CD4-positive, alpha-beta T cell (primary cell): ENCODE measurements at regions of chr14 and their contacts with region 1.

Region 1: DNA sequence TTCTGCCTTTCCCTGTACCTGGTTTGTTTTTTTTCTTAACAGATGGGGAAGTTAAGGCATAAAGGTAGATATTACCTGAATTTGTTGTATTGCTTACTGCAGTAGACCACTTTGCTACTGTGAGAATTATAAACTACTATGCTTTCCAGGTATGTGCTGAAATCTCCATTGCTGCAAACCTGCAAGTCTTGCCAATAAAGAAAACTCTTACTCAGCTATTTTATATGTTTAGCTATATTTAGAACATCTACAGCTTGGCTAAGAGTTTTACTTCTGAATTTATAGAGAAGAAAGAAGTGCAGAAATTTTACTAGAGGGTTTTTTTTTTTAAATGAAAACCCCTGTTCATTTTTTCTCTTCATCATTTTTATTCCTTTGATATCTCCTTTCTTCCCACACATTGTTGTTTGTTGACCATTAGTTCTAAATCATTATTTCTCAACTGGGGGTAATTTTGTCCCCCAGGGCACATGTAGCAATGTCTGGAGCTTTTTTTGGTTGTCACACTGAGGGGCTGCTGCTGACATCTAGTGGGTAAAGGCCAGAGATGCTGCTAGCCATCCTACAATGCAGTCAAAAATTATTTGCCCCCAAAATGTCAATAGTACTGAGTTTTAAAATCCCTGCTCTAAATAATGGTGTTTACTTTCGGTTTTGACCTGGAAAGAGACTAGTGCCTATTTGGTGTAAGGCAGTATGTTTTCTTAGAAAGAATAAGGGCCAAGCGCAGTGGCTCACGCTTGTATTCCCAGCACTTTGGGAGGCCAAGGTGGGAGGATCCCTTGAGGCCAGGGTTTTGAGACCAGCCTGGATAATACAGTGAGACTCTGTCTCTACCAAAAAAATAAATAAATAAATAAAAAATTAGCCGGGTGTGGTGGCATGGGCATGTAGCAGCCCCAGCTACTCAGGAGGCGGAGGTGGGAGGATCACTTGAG is 48.6 kb downstream of the PCNX1 start:
- DNase-seq: peak; percentile 24 to 79 (median 42)
- ATAC-seq: peak; percentile 84
- H3K4me3 ChIP-seq: no peak overlapping the region
- H3K4me3 Mint-ChIP-seq: no peak overlapping the region
- H3K27ac ChIP-seq: no peak overlapping the region
- H3K27ac Mint-ChIP-seq: peak overlapping the region; percentile 55
- H3K4me1 ChIP-seq: peaks cover 19% of the 10 kb centered on the region
- H3K4me1 Mint-ChIP-seq: peaks cover 44% of the 10 kb centered on the region
- H3K27me3 ChIP-seq: no peaks in the 10 kb centered on the region
- H3K27me3 Mint-ChIP-seq: no peaks in the 10 kb centered on the region
- CTCF ChIP-seq: peak; percentile 89

Region 2: DNA sequence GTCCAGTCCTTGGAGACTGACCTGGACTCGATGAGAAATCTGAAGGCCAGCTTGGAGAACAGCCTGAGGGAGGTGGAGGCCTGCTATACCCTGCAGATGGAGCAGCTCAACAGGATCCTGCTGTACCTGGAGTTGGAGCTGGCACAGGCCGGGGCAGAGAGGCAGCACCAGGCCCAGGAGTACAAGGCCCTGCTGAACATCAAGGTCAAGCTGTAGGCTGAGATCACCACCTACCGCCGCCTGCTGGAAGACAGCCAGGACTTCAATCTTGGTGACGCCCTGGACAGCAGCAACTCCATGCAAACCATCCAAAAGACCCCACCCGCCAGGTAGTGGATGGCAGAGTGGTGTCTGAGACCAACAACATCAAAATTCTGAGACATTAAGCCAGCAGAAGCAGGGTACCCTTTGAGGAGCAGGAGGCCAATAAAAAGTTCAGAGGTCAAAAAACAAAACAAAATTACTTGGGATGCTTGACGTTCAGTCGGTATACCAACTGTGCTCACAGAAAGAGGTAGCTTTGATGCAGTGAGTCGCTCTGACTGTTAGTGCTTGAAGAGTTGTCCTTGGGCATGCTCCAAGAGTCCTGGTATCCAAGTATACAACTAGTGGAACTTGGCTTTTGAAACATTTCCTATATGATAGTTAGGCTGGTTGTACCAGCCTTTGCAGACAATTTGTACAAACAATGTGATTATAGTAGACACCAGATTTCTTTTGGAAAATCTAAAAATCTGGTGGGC is 360.2 kb before region 1 on chr14:
- CTCF ChIA-PET with region 1: no interaction called
- POLR2A ChIA-PET with region 1: no interaction called
- intact Hi-C with region 1: no loop called
- DNase-seq: no peak
- ATAC-seq: no peak
- H3K4me3 ChIP-seq: no peak overlapping the region
- H3K4me3 Mint-ChIP-seq: no peak overlapping the region
- H3K27ac ChIP-seq: no peak overlapping the region
- H3K27ac Mint-ChIP-seq: no peak overlapping the region
- H3K4me1 ChIP-seq: peaks cover 11% of the 10 kb centered on the region
- H3K4me1 Mint-ChIP-seq: peaks cover 33% of the 10 kb centered on the region
- H3K27me3 ChIP-seq: no peaks in the 10 kb centered on the region
- H3K27me3 Mint-ChIP-seq: no peaks in the 10 kb centered on the region
- CTCF ChIP-seq: no peak

Region 3: DNA sequence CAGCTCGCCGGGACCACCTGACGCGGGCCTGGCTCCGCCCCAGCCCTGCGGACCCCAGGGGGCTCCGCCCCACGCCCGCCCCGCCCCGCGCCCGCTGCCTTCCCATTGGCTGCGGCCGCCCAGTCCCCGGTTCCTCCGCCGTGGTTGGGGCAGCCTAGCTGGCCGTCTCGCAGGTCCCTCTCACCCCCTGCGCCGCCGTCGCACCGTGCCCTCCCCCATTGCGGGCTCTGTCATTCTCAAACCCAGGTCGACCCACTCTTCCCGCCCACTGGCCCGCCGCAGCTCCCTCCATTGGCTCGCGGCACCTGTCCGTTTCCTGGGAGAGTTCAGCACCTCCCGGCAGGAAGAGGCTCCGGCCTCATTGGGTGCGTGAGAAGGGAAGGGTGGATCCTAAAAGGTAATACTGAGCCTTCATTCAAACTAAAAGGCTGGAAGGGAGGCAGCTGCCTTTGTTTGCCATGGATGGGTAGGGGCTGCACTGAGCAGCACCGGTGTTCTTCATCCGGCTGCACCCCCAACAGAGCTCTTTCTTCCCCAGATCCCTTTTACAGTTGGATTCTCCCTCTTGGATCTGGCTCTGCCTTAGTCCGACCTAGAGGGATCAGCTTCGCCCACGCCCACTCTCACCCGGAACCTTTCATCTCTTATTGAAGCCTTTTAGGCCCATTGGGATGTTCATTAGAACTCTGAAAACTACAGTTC is 146.1 kb before region 1 on chr14:
- CTCF ChIA-PET with region 1: interaction called, 12 read pairs
- POLR2A ChIA-PET with region 1: no interaction called
- intact Hi-C with region 1: no loop called
- DNase-seq: peak; percentile 69 to 94 (median 84)
- ATAC-seq: peak; percentile 74
- H3K4me3 ChIP-seq: peak overlapping the region; percentile 74
- H3K4me3 Mint-ChIP-seq: no peak overlapping the region
- H3K27ac ChIP-seq: peak overlapping the region in 1 of 2 donors; percentile 31
- H3K27ac Mint-ChIP-seq: no peak overlapping the region
- H3K4me1 ChIP-seq: peaks cover 15% of the 10 kb centered on the region
- H3K4me1 Mint-ChIP-seq: peaks cover 10% of the 10 kb centered on the region
- H3K27me3 ChIP-seq: no peaks in the 10 kb centered on the region
- H3K27me3 Mint-ChIP-seq: no peaks in the 10 kb centered on the region
- CTCF ChIP-seq: no peak

Region 4: DNA sequence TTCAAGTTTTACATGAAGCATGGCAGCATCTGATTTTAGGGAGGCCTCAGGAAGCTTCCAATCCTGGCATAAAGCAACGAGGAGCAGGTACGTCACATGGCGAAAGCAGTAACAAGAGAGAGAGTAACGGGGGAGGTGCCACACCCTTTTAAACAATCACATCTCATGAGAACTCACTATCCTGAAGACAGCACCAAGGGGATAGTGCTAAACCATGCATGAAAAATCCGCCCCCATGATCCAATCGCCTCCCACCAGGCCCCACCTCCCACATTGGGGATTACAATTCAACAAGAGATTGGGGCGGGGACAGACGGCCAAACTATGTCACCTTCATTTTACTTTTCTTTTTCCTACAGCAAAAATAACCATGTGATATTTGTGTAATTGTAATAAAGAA is 139.3 kb before region 1 on chr14:
- CTCF ChIA-PET with region 1: interaction called, 26 read pairs
- POLR2A ChIA-PET with region 1: interaction called, 11 read pairs
- intact Hi-C with region 1: loop called (anchors 1 to 2 kb)
- DNase-seq: no peak
- ATAC-seq: no peak
- H3K4me3 ChIP-seq: no peak overlapping the region
- H3K4me3 Mint-ChIP-seq: no peak overlapping the region
- H3K27ac ChIP-seq: no peak overlapping the region
- H3K27ac Mint-ChIP-seq: no peak overlapping the region
- H3K4me1 ChIP-seq: peaks cover 5% of the 10 kb centered on the region
- H3K4me1 Mint-ChIP-seq: peaks cover 15% of the 10 kb centered on the region
- H3K27me3 ChIP-seq: peaks cover 5 to 7% of the 10 kb centered on the region in 2 experiments
- H3K27me3 Mint-ChIP-seq: peaks cover 28% of the 10 kb centered on the region
- CTCF ChIP-seq: no peak

Region 5: DNA sequence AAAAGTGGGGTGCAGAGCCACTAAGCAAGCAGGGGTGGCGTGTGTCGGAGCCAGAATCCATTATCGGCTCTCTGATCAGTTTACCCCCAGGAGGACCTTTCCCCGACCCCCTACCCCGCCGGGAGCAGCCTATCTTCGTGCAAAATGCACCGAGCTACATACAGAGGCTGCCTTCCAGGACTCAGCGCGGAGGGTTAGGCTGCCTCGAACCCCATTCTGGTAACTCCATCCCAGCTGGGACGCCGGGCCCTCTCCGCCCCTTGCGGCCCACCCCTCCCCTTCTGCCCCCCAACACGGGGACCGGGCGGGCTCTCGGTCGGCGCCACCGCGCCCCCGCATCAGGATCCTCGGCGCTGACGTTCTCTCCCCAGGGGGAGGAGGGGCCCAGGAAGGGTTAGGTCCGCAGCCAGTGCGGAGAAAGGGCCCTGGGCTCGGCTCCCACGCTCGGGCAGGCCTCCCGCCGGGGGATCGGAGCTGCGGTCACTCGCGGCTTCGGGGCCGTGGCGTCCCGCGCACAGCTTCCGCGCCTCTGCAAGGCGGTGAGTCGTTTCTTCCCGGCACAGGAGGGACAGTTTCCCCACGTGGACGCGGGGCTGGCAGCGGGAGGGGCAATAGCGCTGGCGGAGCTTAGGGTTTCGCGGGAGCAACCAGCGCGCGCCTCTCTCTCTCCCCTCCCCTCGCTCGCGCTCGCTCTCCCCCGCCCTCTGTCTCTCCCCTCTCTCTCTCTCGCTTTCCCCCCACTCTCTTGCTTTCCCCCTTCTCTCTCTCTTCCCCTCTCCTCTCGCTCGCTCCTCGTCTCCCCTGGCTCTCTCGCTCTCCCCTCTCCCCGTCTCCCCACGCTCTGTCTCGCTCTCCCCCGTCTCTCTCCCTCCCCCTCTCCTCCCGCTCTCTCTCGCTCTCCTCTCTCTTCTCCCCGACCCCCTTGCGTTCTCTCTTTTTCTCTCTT is 134.0 kb before region 1 on chr14:
- CTCF ChIA-PET with region 1: interaction called, 26 read pairs
- POLR2A ChIA-PET with region 1: interaction called, 11 read pairs
- intact Hi-C with region 1: loop called (anchors 1 to 2 kb)
- DNase-seq: peak in 13 of 14 experiments; percentile 23 to 81 (median 44)
- ATAC-seq: peak; percentile 46
- H3K4me3 ChIP-seq: peak overlapping the region; percentile 66
- H3K4me3 Mint-ChIP-seq: peak overlapping the region; percentile 83
- H3K27ac ChIP-seq: no peak overlapping the region
- H3K27ac Mint-ChIP-seq: no peak overlapping the region
- H3K4me1 ChIP-seq: peaks cover 18% of the 10 kb centered on the region
- H3K4me1 Mint-ChIP-seq: peaks cover 28% of the 10 kb centered on the region
- H3K27me3 ChIP-seq: peaks cover 5 to 15% of the 10 kb centered on the region in 2 experiments
- H3K27me3 Mint-ChIP-seq: peaks cover 43% of the 10 kb centered on the region
- CTCF ChIP-seq: no peak

Region 6: DNA sequence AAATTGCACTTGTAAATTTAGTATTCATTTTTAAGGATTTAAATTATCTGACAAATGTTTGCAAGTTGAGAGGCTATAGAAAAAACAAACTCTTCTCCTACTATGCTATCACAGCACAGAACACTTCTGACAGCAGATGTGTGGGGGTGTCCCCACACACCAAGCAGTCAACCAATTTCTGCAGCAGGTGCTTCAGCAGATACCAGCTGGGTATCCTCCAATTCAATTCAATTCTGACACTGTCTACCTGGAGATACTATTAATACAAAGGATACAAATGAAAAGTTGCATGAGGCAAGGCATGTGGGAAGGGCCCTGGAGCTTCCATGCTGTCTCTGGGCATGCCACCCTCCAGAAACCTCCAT is 13.5 kb before region 1 on chr14:
- CTCF ChIA-PET with region 1: interaction called, 26 read pairs
- POLR2A ChIA-PET with region 1: interaction called, 9 read pairs
- intact Hi-C with region 1: no loop called
- DNase-seq: no peak
- ATAC-seq: no peak
- H3K4me3 ChIP-seq: no peak overlapping the region
- H3K4me3 Mint-ChIP-seq: peak overlapping the region; percentile 45
- H3K27ac ChIP-seq: no peak overlapping the region
- H3K27ac Mint-ChIP-seq: peak overlapping the region; percentile 96
- H3K4me1 ChIP-seq: peaks cover 25% of the 10 kb centered on the region
- H3K4me1 Mint-ChIP-seq: peaks cover 85% of the 10 kb centered on the region
- H3K27me3 ChIP-seq: no peaks in the 10 kb centered on the region
- H3K27me3 Mint-ChIP-seq: no peaks in the 10 kb centered on the region
- CTCF ChIP-seq: no peak